ENCODE measurements at regions of chr17 and their contacts with region 1.

Region 1: GRCh38 chr17:33234930-33235685 is 58.0 kb downstream of the ASIC2 start:
- DNase-seq: peak; percentile 22 to 82 (median 70)
- H3K4me3 ChIP-seq: no peak overlapping the region
- H3K27ac ChIP-seq: peak overlapping the region in 9 of 59 donors; percentile 5 to 86 (median 18)
- H3K27me3 ChIP-seq: no peaks in the 10 kb centered on the region
- CTCF ChIP-seq: no peak

Region 2: GRCh38 chr17:33192951-33193911 is 41.9 kb before region 1 on chr17:
- intact Hi-C with region 1: loop called in 1 of 2 experiments (anchors 5 kb)
- DNase-seq: no peak
- H3K4me3 ChIP-seq: no peak overlapping the region
- H3K27ac ChIP-seq: no peak overlapping the region
- H3K27me3 ChIP-seq: peaks cover 0 to 14% (median 0%) of the 10 kb centered on the region in 45 donors
- CTCF ChIP-seq: no peak